Left cardiac atrium (tissue), 4 donors: ENCODE measurements at regions of chr1 and their contacts with region 1.

Region 1: DNA sequence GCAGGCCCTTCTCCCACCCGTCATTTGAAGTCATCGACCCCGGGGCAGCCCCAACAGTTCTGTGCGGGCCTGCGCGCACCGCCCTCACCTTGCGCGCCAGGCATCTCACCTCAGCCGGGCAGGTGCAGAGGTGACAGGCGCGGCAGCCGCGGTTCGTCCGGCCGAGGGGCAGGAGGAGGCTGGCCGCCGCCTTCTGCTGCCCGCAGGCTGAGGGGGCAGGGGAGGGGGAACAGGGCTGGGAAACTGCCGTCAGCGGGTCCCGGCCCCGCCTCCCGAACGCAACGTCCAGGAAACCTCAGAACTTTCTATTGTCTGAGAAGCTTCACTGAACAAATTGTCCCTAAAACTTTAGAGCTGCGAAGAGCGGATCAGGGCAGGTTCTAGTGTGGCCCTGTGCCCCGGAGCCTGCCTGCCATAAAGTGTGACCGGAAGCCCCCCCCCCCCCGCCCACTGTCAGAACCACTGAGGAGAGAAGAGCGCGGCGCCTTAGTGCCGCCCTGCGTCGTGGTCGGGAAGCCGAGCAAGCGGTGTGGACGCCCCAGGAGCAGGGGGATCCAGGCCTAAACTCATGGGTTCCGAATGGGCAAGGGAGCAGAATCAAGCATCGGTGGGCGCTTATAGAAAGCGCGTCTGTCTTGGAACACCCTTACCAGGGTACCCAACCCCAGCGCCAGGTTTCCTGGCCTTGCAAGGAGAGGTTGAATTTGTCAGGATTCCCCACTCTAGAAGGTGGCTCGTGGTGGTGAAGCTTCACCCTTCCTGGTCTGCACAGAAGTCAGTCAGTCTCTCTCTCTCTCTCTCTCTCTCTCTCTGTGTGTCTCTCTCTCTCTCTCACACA is 13.3 kb upstream of the TBX15 start:
- DNase-seq: peak; percentile 41
- ATAC-seq: peak; percentile 61 to 69

Region 2: DNA sequence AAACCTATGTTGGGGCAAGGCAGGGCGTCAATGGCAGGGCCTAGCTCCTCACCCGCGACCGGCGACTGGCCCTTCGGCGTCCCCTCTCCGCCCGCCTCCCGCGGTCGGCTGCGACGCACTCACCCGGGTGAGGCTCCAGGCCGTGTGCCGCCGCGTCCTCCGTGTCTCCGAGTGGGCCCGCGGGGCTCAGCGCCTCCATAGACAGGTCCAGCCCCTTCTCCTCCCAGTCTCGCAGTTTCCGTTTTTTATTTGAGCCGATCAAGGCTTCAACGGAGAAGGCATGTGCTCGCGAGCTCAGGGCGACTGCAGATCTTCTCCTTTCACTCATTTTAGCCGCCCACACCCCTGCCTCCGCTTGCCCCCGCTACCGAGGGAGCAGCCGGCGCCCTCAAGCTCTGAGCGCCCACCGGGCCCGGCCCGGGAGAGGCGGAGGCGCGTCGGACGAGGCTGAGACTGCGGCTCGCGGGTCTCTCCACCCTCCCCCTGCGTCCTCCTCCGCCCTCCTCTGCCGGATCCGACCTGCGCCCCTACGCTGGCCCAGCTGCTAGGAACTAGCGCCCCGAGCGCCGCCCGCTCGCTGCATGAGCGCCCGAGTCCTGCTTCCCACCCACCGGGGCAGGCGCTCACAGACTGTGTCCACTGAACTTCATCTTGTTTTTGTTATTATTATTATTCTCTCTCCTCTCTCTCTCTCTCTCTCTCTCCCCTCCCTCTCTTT is 13.8 kb before region 1 on chr1:
- intact Hi-C with region 1: loop called in 1 of 2 experiments (anchors 2 kb)
- DNase-seq: no peak
- ATAC-seq: peak; percentile 70 to 72

Region 3: GRCh38 chr1:119046785-119047438 is 45.5 kb after region 1 on chr1:
- intact Hi-C with region 1: no loop called
- DNase-seq: no peak
- ATAC-seq: peak; percentile 69 to 91